ENCODE measurements at regions of chr5 and their contacts with region 1.

Region 1: DNA sequence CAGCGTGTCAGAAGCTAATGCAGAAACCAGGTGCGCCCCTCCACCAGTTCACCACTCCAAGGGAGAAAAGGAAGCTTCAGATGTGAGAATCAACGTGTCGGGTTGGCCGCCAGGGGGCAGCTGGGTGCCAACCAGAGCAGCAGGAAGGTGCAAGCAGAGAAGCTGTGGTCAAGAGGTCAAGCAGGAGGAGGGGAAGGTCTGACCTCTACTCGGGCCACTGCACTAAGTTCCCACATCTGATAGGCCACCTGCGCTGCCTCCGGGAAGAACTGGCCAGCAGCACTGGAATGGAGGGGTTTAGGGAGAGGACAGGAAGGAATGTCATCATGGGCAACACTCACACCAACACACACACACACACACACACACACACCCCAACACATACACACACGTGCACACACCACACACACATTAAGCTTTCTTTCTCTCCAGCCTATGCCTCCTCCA is 31.4 kb downstream of the ANXA6 start:
- DNase-seq: peak; percentile 88
- ATAC-seq: peak; percentile 58

Region 2: GRCh38 chr5:150486402-150487198 is 639.6 kb before region 1 on chr5:
- intact Hi-C with region 1: no loop called
- DNase-seq: peak; percentile 74
- ATAC-seq: peak; percentile 13

Region 3: GRCh38 chr5:150948527-150948926 is 177.7 kb before region 1 on chr5:
- intact Hi-C with region 1: no loop called
- DNase-seq: no peak
- ATAC-seq: no peak

Region 4: DNA sequence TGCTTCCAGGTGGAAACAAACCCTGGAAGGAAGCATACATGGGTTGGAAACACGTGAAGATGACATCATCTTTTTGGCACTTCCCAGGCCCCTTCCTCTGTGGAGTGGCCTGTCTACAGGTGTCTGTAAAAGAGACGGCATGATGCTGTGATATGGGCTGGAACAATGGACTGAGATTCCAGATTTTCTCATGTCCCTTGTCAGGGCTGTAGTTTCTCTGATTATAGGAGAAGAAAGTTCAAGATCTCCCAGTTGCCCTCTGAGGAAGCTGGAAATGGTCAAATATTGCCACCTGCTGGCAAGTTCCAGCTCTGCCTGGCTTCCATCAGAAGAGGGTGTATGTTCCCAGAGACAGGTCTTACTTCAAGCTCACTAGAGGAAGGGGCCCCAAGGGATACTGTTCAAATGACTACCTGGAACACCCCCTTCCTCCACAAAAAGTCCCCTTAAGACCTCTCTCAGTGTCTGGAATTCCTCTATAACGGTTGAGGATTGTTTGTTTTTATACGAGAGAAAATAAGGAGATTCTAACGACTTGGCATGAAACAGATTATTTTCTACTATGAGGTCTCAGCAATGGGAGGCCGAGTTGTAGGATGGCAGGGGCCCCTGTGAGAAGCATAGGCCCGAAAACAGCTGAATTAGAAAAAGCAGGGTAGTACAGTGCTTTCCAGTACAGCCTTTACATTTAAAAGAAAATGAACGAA is 38.6 kb after region 1 on chr5:
- intact Hi-C with region 1: loop called (anchors 5 kb)
- DNase-seq: peak; percentile 79
- ATAC-seq: peak; percentile 90

Region 5: GRCh38 chr5:151239237-151239861 is 113.1 kb after region 1 on chr5:
- intact Hi-C with region 1: loop called (anchors 5 kb)
- DNase-seq: peak; percentile 90
- ATAC-seq: peak; percentile 79

Region 6: GRCh38 chr5:151509231-151509630 is 383.0 kb after region 1 on chr5:
- intact Hi-C with region 1: no loop called
- DNase-seq: no peak
- ATAC-seq: no peak

Measured in Right ventricle myocardium superior (tissue), 1 donor.